ENCODE measurements at regions of chr14 and their contacts with region 1.

Region 1: GRCh38 chr14:68349900-68350629 is 442.8 kb downstream of the ZFP36L1 start:
- DNase-seq: no peak
- H3K4me3 ChIP-seq: no peak overlapping the region
- H3K27ac ChIP-seq: no peak overlapping the region
- H3K4me1 ChIP-seq: no peaks in the 10 kb centered on the region
- H3K27me3 ChIP-seq: no peaks in the 10 kb centered on the region
- CTCF ChIP-seq: no peak
- POLR2A ChIP-seq: no peak

Region 2: GRCh38 chr14:68263563-68264259 is 86.4 kb before region 1 on chr14:
- intact Hi-C with region 1: no loop called
- DNase-seq: no peak
- H3K4me3 ChIP-seq: no peak overlapping the region
- H3K27ac ChIP-seq: peak overlapping the region; percentile 26 to 53
- H3K4me1 ChIP-seq: no peaks in the 10 kb centered on the region
- H3K27me3 ChIP-seq: no peaks in the 10 kb centered on the region
- CTCF ChIP-seq: no peak
- POLR2A ChIP-seq: no peak

Region 3: DNA sequence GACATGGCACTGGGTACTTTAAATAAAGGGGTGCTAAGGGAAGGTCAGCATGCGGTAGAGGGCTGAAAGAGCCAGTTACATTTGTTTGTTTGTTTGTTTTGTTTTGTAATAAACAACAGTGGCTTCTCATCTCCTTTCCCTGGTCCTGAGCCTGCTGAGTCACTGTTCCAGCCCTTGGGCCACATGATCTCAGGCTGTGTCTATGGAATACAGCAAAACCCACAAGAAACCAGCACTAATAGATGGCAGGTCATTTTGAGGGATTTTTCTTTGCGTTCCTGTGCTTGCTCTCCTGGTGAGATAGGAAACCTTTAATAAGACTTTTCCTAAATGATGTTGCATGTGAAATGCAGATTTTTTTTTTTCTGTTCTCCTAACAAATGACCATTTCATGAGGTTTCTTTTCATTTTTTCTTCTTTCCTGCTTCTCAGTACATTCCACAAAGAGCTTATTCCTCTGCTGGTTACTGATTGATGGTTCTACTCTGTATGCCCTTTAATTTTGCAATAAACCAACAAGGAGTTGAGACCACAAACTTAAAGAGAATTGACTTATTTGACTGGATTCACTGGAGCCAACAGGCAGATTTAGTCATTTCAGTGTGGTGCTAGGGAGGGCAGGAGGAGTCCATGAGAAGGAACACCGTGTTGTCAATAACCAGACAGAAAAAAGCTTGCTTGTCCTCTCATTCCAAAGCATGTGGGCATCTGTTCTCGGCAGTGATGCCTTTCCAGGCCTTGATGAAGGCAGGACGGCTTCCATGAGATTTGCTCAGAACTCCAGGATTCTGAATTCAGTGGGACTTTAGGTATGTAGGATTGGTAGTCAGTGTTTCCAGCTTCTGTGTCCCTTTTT is 71.3 kb before region 1 on chr14:
- intact Hi-C with region 1: loop called (anchors 10 kb)
- DNase-seq: no peak
- H3K4me3 ChIP-seq: no peak overlapping the region
- H3K27ac ChIP-seq: peak overlapping the region; percentile 29 to 68
- H3K4me1 ChIP-seq: peaks cover 0 to 11% of the 10 kb centered on the region in 2 donors
- H3K27me3 ChIP-seq: no peaks in the 10 kb centered on the region
- CTCF ChIP-seq: no peak
- POLR2A ChIP-seq: no peak